ENCODE measurements at regions of chr14 and their contacts with region 1.

Region 1: DNA sequence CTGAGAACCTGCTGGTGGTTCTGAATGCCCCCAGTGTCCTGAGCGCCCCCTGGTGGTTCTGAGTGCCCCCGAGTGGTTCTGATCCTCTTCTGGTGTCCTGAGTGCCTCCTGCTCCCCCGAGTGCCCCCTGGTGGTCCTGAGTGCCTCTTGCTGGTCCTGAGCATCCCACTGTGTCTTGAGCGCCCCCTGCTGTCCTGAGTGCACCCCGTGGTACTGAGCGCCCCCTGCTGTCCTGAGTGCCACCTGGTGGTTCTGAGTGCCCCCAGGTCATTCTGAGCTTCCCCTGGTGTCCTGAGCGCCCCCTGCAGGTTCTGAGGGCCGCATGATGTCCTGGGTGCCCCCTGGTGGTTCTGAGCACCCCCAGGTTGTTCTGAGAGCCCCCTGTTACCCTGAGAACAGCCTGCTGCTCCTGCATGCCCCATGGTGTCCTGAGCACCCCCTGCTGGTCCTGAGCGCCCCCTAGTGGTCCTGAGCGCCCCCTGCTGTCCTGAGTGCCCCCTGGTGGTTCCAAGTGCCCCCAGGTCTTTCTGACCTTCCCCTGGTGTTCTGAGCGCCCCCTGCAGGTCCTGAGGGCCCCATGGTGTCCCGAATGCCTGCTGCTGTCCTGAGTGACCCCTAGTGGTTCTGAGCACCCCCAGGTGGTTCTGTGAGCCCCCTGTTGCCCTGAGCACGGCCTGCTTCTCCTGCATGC is 1165.4 kb downstream of the TMEM121 start:
- DNase-seq: peak; percentile 9

Region 2: GRCh38 chr14:106518054-106518943 is 173.4 kb before region 1 on chr14:
- CTCF ChIA-PET with region 1: interaction called, 16 read pairs
- POLR2A ChIA-PET with region 1: no interaction called
- DNase-seq: no peak

Region 3: DNA sequence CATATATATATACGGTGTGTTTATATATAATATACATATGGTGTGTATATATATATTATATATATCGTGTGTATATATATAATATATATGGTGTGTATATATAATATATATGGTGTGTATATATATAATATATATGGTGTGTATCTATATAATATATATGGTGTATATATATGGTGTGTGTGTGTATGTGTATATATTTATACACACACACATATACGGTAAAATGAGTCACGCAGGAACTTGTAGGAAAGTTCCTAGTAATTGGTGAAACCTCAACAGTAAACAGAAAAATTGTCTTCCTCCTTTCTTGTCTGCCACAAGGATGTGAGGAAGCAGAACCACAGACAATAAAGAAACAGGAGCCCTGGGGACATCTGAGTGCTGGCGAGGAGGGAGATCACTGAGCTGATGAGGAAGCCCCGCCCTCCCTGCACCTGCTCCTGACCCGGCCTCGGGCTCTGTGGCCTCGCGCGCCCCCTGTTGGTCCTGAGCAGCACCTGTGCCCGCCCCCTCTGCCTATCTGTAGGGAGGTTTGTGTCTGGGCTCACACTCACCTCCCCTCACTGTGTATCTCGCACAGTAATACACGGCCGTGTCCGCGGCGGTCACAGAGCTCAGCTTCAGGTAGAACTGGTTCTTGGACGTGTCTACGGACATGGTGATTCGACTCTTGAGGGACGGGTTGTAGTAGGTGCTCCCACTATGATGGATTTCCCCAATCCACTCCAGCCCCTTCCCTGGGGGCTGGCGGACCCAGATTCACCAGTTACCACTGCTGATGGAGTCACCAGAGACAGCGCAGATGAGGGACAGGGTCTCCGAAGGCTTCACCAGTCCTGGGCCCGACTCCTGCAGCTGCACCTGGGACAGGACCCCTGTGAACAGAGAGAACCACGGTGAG is 85.9 kb before region 1 on chr14:
- CTCF ChIA-PET with region 1: no interaction called
- POLR2A ChIA-PET with region 1: no interaction called
- DNase-seq: peak; percentile 38

Region 4: GRCh38 chr14:106657460-106657859 is 34.3 kb before region 1 on chr14:
- CTCF ChIA-PET with region 1: no interaction called
- POLR2A ChIA-PET with region 1: no interaction called
- DNase-seq: no peak

Region 5: DNA sequence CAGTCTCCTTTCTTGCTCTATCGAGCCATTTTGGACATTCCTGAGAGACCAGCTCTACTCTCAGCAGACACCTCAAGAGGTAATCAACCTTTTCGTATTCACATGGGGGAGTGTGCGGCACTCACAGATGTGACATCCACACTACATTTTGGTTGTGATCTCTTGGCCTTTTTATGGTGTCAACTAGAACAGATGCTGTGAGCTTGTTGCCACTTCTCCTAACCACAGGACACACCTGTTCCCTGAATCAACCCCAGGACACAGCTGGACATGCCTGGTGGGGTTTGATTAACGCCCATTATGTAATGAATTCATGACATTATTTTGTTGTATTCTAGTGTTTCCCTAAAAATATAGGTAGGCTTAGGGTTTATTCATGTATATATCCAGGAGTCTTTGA is 21.7 kb before region 1 on chr14:
- CTCF ChIA-PET with region 1: no interaction called
- POLR2A ChIA-PET with region 1: no interaction called
- DNase-seq: no peak

Measured in HEK293T (cell line).